Activated CD8-positive, alpha-beta memory T cell treated with anti-CD3 and anti-CD28 coated beads, Interleukin-2, amount 10 ng/mL, durations not matched to agents 7 days and 5 days (primary cell): ENCODE measurements at regions of chr14 and their contacts with region 1.

Region 1: DNA sequence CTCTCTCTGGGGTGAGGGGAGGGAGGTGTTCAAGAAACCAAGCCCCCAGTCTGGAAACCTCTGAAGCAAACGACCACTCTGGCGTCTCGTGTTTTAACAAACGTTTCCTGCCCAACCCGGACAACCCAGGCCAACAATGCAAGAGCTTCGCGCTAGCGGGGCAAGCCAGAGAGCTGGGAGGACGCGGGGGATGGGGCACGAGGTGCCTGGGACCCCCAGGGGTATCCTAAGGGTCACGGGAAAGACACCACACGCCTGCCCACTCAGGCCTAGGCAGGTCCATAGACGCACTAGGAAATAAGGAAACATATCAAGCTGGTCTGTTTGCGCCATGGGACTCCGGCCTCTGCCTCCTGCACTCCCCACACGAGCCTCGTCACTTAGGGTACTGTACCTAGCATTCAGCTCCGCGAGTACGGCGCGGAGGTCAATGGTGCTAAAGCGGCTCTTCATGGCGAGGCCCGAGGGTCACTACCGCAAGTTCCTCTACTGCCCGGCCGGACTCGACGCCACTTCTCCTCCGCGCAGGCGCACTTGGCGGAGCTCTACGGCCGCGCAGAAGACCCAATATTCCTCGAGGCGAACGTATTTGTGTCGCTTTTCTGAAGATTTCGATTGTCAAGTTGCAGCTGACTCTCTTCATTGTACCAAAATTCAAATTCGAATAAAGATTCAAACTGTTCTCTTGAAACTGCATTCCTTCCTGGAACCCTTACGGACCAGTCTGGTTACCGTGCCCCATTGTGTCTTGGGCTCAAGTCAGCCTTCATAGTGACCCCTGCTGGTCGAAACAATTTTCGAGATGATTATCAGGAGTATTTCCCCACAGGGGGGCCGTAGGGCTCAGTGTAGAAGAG is at the start of gene NEMF:
- DNase-seq: peak; percentile 88
- ATAC-seq: peak; percentile 86
- H3K4me3 Mint-ChIP-seq: peak within 1 kb of the TSS; percentile 92
- H3K27ac Mint-ChIP-seq: peak within 1 kb of the TSS; percentile 96
- H3K4me1 Mint-ChIP-seq: peaks cover 43% of the 10 kb centered on the region
- H3K27me3 Mint-ChIP-seq: no peaks in the 10 kb centered on the region
- total RNA-seq, gene NEMF: 78.7 to 82.8 TPM

Region 2: GRCh38 chr14:49620182-49621113 is 232.1 kb before region 1 on chr14 and contains the starts of genes MGAT2 and RPL36AL:
- CTCF ChIA-PET with region 1: interaction called, 17 read pairs
- DNase-seq: peak; percentile 98
- ATAC-seq: peak; percentile 88
- H3K4me3 Mint-ChIP-seq: peak within 1 kb of the TSS; percentile 84
- H3K27ac Mint-ChIP-seq: peak within 1 kb of the TSS; percentile 92
- H3K4me1 Mint-ChIP-seq: peaks cover 46% of the 10 kb centered on the region
- H3K27me3 Mint-ChIP-seq: no peaks in the 10 kb centered on the region
- total RNA-seq, gene MGAT2: 68.4 to 75.9 TPM
- total RNA-seq, gene RPL36AL: 245 to 248 TPM

Region 3: GRCh38 chr14:49767562-49768300 is 84.8 kb before region 1 on chr14 and contains the start of gene KLHDC2:
- CTCF ChIA-PET with region 1: interaction called, 10 read pairs
- DNase-seq: peak; percentile 94
- ATAC-seq: peak; percentile 88
- H3K4me3 Mint-ChIP-seq: peak within 1 kb of the TSS; percentile 90
- H3K27ac Mint-ChIP-seq: peak within 1 kb of the TSS; percentile 97
- H3K4me1 Mint-ChIP-seq: peaks cover 31% of the 10 kb centered on the region
- H3K27me3 Mint-ChIP-seq: no peaks in the 10 kb centered on the region
- total RNA-seq, gene KLHDC2: 25.3 to 32.3 TPM

Region 4: DNA sequence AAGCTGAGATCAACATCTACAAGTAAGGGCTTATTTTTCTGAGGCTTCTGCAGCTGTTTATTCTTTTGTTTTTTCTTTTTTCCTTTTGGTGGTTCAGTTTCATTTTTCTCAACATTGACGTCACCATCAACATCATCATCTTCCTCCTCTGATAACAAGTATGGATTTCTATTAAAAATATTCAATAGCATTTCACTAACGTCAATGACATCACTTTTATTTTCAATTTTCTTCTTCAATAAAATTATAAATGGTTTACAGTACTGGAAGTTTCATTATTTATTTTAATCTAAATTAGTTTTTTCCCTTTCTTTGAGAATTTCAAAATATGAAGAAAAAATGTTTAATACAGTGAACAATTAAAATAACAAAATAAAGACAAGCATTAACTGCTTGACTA is 23.9 kb before region 1 on chr14:
- CTCF ChIA-PET with region 1: interaction called, 13 read pairs
- DNase-seq: no peak
- ATAC-seq: no peak
- H3K4me3 Mint-ChIP-seq: no peak overlapping the region
- H3K27ac Mint-ChIP-seq: no peak overlapping the region
- H3K4me1 Mint-ChIP-seq: peaks cover 6% of the 10 kb centered on the region
- H3K27me3 Mint-ChIP-seq: no peaks in the 10 kb centered on the region

Region 5: GRCh38 chr14:49867831-49868723 is 15.5 kb after region 1 on chr14:
- CTCF ChIA-PET with region 1: interaction called, 121 read pairs
- DNase-seq: peak; percentile 99
- ATAC-seq: peak; percentile 93
- H3K4me3 Mint-ChIP-seq: peak overlapping the region; percentile 98
- H3K27ac Mint-ChIP-seq: peak overlapping the region; percentile 100
- H3K4me1 Mint-ChIP-seq: peaks cover 30% of the 10 kb centered on the region
- H3K27me3 Mint-ChIP-seq: no peaks in the 10 kb centered on the region

Region 6: DNA sequence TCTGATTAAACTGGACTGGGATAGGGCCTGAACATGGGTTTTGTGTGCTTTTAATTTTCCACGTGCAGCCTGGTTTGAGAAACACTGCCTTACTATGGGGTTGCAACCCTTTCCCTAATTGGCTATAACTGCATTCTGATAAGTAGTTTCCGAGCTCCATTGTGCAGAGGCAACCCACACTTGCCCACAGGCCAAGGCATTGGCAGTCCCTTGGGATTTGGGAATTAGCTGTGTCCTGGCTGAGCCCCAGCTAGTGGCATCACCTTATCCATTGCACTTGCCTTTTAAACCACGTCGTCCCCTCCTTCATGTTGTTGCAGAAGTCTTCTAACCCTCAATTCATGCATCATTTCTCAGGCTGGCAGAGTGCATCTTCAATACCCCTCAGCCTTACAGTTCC is 253.6 kb after region 1 on chr14:
- CTCF ChIA-PET with region 1: interaction called, 45 read pairs
- DNase-seq: no peak
- ATAC-seq: no peak
- H3K4me3 Mint-ChIP-seq: no peak overlapping the region
- H3K27ac Mint-ChIP-seq: no peak overlapping the region
- H3K4me1 Mint-ChIP-seq: peaks cover 32% of the 10 kb centered on the region
- H3K27me3 Mint-ChIP-seq: no peaks in the 10 kb centered on the region

Region 7: DNA sequence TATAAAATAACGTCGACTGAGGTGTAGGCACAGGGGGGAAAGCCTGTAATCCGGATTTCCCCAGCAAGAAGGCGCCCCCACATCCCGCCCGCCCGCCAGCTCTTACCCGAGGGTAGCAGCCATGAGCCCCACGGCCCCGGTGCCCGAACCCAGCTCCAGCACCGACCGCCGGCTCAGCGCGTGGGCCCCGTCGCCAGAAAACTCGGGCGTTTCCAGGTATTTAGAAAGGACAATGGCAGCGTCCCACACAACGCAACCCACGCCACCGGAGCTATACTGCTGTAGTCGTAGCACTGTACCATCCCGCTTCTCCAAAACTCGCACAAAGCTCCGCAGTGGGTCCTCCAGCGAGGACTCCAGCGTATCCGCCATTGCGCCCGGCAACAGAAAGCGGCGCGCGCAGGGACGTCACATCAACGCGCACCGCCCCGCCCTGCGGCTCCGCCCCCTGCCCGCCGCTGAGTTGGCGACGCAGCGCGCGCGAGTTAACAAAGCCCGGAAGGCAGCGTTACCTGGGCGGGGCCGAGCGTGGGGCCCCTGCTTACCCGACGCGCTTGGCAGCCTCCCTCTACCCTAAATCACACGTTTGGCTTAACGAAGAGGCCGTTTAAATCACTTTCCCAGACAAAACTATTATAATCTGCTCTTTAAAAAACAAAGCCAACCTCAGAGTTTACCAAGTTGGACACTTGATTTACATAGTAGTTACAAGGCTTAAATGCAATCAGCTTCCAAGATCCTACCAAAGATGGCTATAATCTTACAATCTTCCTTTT is 263.8 kb after region 1 on chr14 and contains the start of gene VCPKMT:
- CTCF ChIA-PET with region 1: interaction called, 25 read pairs
- DNase-seq: peak; percentile 96
- ATAC-seq: peak; percentile 99
- H3K4me3 Mint-ChIP-seq: peak within 1 kb of the TSS; percentile 97
- H3K27ac Mint-ChIP-seq: peak within 1 kb of the TSS; percentile 98
- H3K4me1 Mint-ChIP-seq: peaks cover 32% of the 10 kb centered on the region
- H3K27me3 Mint-ChIP-seq: no peaks in the 10 kb centered on the region
- total RNA-seq, gene VCPKMT: 12.0 to 14.5 TPM